ENCODE measurements at regions of chr14 and their contacts with region 1.

Region 1: DNA sequence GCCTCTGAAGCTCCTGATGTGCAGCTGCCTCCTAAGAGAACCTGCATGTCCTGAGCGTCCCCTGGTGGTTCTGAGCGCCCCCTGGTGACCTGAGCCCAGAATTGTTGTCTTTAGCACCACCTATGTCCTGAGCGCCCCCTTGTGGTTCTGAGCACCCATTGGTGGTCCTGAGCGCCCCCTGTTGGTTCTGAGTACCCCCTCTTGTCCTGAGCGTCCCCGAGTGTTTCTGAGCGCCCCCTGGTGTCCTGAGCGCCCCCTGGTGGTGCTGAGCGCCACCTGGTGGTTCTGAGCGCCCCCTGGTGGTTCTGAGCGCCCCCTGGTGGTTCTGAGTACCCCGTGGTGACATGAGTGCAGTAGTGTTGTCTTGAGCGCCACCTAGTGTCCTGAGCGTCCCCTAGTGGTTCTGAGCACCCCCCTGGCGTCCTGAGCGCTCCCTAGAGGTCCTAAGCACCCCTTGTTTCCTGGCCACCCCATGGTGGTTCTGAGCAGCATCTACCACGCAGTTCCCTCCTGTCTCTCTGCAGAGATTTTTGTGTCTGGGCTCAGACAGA is 782.5 kb downstream of the TMEM121 start:
- DNase-seq: peak; percentile 88
- H3K4me3 Mint-ChIP-seq: peak overlapping the region; percentile 43
- H3K27ac Mint-ChIP-seq: peak overlapping the region; percentile 61
- H3K4me1 Mint-ChIP-seq: no peaks in the 10 kb centered on the region
- H3K27me3 Mint-ChIP-seq: peaks cover 50% of the 10 kb centered on the region

Region 2: GRCh38 chr14:106277503-106277902 is 31.4 kb before region 1 on chr14:
- CTCF ChIA-PET with region 1: interaction called, 26 read pairs
- POLR2A ChIA-PET with region 1: no interaction called
- DNase-seq: peak; percentile 21
- H3K4me3 Mint-ChIP-seq: peak overlapping the region; percentile 14
- H3K27ac Mint-ChIP-seq: no peak overlapping the region
- H3K4me1 Mint-ChIP-seq: peaks cover 24% of the 10 kb centered on the region
- H3K27me3 Mint-ChIP-seq: peaks cover 25% of the 10 kb centered on the region

Region 3: GRCh38 chr14:106287506-106287905 is 21.4 kb before region 1 on chr14:
- CTCF ChIA-PET with region 1: interaction called, 15 read pairs
- POLR2A ChIA-PET with region 1: no interaction called
- DNase-seq: no peak
- H3K4me3 Mint-ChIP-seq: no peak overlapping the region
- H3K27ac Mint-ChIP-seq: no peak overlapping the region
- H3K4me1 Mint-ChIP-seq: no peaks in the 10 kb centered on the region
- H3K27me3 Mint-ChIP-seq: peaks cover 12% of the 10 kb centered on the region

Region 4: DNA sequence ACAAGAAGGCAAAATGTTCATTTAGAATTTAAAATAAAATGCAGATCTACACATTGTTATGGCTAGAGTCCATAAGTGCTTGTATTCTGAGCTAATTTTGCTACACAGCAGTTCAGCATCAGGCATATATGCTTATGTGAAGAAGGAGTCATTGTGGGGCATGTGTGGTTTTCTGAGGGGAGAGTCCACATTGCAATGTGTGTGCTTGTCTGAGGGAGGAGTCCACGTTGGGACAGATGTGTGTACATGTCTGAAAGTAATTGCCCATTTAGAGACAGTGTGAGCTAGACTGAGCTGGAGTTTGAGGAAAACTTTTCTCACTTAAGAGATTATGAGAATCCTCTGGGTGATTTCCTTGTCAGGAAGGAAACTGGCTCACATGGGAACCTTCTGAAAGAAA is 14.6 kb before region 1 on chr14:
- CTCF ChIA-PET with region 1: interaction called, 21 read pairs
- POLR2A ChIA-PET with region 1: no interaction called
- DNase-seq: no peak
- H3K4me3 Mint-ChIP-seq: no peak overlapping the region
- H3K27ac Mint-ChIP-seq: no peak overlapping the region
- H3K4me1 Mint-ChIP-seq: peaks cover 2% of the 10 kb centered on the region
- H3K27me3 Mint-ChIP-seq: peaks cover 46% of the 10 kb centered on the region

Region 5: GRCh38 chr14:106347890-106348755 is 39.2 kb after region 1 on chr14:
- CTCF ChIA-PET with region 1: interaction called, 11 read pairs
- POLR2A ChIA-PET with region 1: no interaction called
- DNase-seq: no peak
- H3K4me3 Mint-ChIP-seq: no peak overlapping the region
- H3K27ac Mint-ChIP-seq: no peak overlapping the region
- H3K4me1 Mint-ChIP-seq: no peaks in the 10 kb centered on the region
- H3K27me3 Mint-ChIP-seq: peaks cover 3% of the 10 kb centered on the region

Region 6: GRCh38 chr14:106372870-106373652 is 64.1 kb after region 1 on chr14:
- CTCF ChIA-PET with region 1: interaction called, 16 read pairs
- POLR2A ChIA-PET with region 1: no interaction called
- DNase-seq: peak; percentile 79
- H3K4me3 Mint-ChIP-seq: no peak overlapping the region
- H3K27ac Mint-ChIP-seq: no peak overlapping the region
- H3K4me1 Mint-ChIP-seq: peaks cover 24% of the 10 kb centered on the region
- H3K27me3 Mint-ChIP-seq: peaks cover 11% of the 10 kb centered on the region